PC-3 (cell line): ENCODE measurements at regions of chr7 and their contacts with region 1.

Region 1: DNA sequence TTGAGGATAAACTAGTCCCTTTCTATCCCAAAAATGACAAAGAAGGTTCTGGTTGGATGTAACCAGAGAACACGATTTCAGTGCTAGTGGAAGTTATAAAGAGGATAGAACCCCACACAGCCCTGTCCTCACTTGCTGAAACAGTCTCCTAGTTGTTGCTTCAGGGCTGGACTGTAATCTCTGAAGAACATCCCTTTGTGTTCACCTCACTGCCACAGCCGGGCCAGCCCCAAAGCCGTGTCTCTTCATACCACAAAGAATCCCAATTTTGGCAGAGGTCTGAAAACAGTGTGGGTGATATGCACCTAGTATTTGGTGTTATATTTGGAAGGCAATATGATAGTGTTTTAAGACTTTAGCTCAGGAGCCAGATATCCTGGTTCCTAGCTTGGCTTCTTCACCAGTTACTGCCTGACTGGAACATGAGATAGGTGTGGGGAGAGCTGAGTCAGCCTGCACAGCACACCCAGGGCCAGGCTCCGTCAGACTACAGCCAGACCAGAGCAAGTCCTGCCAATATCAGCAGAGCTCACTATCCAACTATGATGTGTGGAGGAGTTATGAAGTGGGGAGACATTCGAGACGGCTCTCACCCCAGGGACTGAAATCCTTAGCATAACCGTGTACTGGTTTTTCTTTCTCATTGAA is 21.2 kb downstream of the CYP3A4 start:
- DNase-seq: peak; percentile 49
- ATAC-seq: peak; percentile 99
- H3K4me3 ChIP-seq: no peak overlapping the region
- H3K27ac ChIP-seq: no peak overlapping the region
- H3K4me1 ChIP-seq: peaks cover 13% of the 10 kb centered on the region; the same call in 1 of the 2 replicates
- H3K27me3 ChIP-seq: no peaks in the 10 kb centered on the region
- CTCF ChIP-seq: no peak

Region 2: DNA sequence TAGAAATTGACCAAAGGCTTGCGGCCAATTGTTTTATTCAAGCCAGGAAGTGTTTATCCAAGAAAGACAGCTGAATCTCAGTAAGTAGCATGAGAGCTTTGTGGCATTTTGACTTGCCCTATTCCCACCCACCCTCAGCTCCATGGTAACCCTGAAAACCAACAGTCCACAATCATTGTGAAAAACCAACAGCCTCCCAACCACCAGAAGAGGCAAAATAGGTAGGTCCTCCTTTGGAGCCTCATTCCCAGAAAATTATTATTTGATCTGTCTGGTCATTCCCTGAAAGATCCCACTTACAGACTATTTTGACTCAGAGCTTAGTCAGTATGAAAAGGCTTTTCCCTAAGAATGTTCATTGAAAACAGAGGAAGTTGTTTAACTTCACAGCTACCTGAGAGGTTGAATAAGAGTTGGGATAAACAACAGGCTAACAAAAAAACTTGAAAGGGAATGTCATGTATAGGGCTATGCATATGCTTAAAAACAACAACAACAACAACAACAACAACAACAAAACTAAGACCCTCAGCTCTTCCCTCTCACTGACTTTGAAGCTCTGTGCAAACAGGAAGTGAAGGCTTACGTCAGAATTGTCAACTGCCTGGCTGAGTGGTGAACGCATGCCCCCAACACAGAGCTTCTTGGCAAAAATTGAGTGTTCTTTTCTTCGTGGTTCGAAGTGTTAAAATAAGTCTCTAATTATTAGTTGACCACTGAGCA is 566.1 kb before region 1 on chr7:
- CTCF ChIA-PET with region 1: no interaction called
- POLR2A ChIA-PET with region 1: no interaction called
- intact Hi-C with region 1: no loop called
- DNase-seq: peak; percentile 63
- ATAC-seq: no peak
- H3K4me3 ChIP-seq: no peak overlapping the region
- H3K27ac ChIP-seq: peak overlapping the region; percentile 79
- H3K4me1 ChIP-seq: peaks cover 40% of the 10 kb centered on the region
- H3K27me3 ChIP-seq: no peaks in the 10 kb centered on the region
- CTCF ChIP-seq: no peak

Region 3: DNA sequence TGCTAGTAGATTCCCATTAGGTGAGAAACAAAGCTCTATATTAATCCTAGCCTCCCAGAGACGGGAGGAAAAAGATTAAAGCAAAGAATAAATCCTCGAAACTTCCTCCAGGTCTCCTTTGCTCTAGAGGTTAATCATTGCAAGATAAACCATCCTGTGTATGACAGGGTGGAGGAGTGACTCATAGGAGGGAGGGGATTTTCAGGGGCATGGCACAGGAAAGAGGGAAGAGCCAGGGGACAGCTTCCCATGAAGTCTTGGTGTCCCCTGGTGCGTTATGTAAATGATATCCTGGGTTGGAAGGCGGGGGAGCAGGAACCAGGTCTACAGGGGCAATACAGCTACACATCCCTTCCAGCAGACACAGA is 83.8 kb before region 1 on chr7:
- CTCF ChIA-PET with region 1: no interaction called
- POLR2A ChIA-PET with region 1: interaction called, 5 read pairs
- intact Hi-C with region 1: loop called (anchors 10 kb)
- DNase-seq: peak; percentile 75
- ATAC-seq: peak; percentile 99
- H3K4me3 ChIP-seq: no peak overlapping the region
- H3K27ac ChIP-seq: no peak overlapping the region
- H3K4me1 ChIP-seq: peaks cover 11% of the 10 kb centered on the region
- H3K27me3 ChIP-seq: no peaks in the 10 kb centered on the region
- CTCF ChIP-seq: no peak